A549 (cell line): ENCODE measurements at regions of chr10 and their contacts with region 1.

Region 1: GRCh38 chr10:21495752-21496342 is 29.6 kb downstream of the SKIDA1 start:
- DNase-seq: peak; percentile 94
- ATAC-seq: peak; percentile 78 to 81
- H3K4me3 ChIP-seq: peak overlapping the region; percentile 77
- H3K27ac ChIP-seq: peak overlapping the region; percentile 93 to 99
- H3K4me1 ChIP-seq: peaks cover 37% of the 10 kb centered on the region
- CTCF ChIP-seq: peak; percentile 93
- EP300 ChIP-seq: peak in 1 of 2 experiments; percentile 48; a peak in 1 of 5 replicates
- POLR2A ChIP-seq: peak; percentile 53
- RAD21 ChIP-seq: peak; percentile 81 to 99

Region 2: DNA sequence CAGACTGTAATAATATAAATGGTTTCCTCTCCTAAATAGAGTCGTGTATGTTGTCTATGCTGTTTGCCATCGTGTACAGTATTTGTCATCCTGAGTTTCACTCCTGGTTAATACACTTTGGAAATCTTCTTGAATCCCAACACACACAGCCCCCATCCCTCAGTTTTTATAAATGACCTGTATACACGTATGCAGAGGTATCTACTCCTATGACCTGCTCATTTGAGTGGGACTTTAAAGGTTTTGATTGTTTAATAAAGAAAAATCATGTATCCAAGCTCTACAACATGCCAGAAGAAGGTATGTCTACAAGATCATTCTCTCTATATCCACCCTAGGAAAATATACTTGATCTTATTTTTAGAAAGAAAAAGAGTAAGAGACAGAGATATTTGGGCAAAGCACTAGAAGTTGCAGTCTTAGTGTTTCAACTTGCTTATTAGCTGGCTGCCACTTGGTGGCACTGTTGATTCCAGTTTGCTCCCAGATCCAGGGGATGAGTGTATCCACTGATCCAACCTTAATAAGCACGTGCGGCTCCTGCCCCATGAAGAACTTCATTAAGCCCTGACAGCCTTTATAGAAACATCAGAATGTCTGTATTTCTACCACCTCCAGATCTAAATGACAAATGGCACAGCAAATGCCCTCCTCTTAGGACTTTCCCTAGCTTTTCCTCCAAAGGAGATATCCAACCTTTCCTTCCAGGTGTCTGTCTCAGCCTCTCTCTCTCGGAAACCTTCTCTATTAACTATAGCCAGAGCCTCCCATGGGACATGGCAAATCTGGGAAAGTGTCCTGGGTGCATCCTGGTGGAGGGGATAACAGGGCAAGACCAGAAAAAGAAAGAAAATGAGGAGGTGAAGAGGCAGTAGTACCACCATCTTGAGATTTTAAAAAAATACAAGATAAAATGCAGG is 417.2 kb before region 1 on chr10:
- CTCF ChIA-PET with region 1: interaction called, 12 read pairs
- POLR2A ChIA-PET with region 1: interaction called, 5 read pairs
- DNase-seq: peak; percentile 55 to 81
- ATAC-seq: peak; percentile 95 to 97
- H3K4me3 ChIP-seq: no peak overlapping the region
- H3K27ac ChIP-seq: peak overlapping the region; percentile 74 to 75
- H3K4me1 ChIP-seq: peaks cover 20% of the 10 kb centered on the region
- CTCF ChIP-seq: peak; percentile 92
- EP300 ChIP-seq: no peak
- POLR2A ChIP-seq: no peak
- RAD21 ChIP-seq: peak; percentile 98

Region 3: DNA sequence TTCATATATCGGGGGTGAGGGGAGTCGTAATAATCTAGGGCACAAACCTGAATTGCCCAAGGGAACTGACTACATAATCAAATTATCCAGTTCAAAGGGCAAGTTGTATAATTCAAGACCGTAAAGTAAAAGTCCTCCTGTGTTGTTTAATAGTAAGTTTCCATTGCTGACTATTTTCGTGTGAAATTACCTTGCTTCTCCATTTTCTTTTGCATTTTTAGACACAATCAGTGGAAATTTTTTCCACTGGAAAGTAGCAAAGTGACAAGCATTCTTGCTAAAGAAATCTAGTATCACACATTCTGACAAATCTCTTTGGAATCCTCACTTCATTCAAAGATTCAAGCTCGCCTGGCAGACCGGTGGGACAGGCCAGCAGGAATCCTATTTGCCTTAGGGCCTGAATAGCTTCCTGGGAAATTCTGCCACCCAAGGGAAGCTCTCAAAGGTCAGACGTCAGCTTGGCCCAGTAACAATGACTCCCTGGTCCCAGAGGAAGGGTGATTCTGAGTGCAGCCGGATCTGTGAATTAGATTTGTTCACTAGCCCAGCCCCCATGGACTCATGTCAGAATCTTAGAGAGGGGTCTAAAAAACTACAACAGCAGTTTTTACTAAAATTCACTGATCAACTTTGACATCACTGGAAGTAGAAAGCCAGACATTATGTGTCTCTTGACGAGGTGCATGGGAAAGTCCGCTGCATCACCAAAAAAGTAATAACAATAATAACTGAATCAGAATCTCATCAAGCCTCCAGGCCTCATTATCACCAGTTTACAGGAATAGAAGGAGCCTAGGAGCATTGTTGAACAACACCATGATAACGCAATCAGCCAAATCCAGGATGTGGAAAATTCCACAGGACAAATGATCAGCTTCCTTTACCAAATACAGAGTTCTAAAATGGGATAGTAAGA is 131.4 kb before region 1 on chr10:
- CTCF ChIA-PET with region 1: interaction called, 25 read pairs
- POLR2A ChIA-PET with region 1: interaction called, 13 read pairs
- DNase-seq: peak; percentile 89 to 99
- ATAC-seq: peak; percentile 96 to 97
- H3K4me3 ChIP-seq: peak overlapping the region; percentile 18; the same call in 1 of the 3 replicates
- H3K27ac ChIP-seq: peak overlapping the region; percentile 95 to 98
- H3K4me1 ChIP-seq: peaks cover 80% of the 10 kb centered on the region
- CTCF ChIP-seq: no peak
- EP300 ChIP-seq: peak; percentile 89 to 96; a peak in 4 of 5 replicates
- POLR2A ChIP-seq: no peak
- RAD21 ChIP-seq: peak; percentile 56 to 64

Region 4: DNA sequence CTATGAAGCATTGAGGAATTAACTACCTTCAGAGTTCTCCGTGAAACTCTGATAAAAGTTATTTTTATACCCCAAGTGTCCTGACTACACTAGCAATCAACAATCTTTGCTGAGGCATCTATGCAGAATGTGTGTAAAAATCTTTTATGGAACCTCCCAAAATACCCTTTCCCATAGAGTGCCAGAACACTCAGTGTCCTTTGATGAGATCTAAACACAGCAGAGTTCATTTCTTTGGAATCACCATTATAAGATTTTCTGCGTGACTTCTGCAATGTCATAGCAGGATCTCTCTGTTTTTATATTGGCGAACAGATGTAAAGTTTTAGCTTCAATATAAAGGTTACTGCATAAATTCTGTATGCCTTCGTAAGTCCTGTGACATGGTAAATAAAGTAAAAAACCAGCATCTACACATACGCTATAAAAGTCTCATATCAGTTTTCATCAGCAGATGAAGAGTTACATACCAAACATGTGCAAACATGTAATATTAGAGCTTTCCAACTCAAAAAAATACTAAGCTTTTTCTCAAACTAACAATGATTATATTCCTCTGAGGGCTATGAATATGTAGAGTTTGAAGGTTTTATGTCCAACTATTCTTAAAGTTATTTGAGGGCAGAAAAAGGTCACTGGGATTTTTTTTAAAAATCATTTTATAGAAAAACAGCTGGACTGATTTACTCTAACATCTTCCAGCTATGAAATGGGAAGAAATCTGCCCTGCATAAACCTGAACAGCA is 37.5 kb before region 1 on chr10:
- CTCF ChIA-PET with region 1: no interaction called
- POLR2A ChIA-PET with region 1: no interaction called
- DNase-seq: no peak
- ATAC-seq: no peak
- H3K4me3 ChIP-seq: no peak overlapping the region
- H3K27ac ChIP-seq: no peak overlapping the region
- H3K4me1 ChIP-seq: no peaks in the 10 kb centered on the region
- CTCF ChIP-seq: no peak
- EP300 ChIP-seq: no peak
- POLR2A ChIP-seq: no peak
- RAD21 ChIP-seq: no peak

Region 5: GRCh38 chr10:21525367-21526183 is 29.7 kb after region 1 on chr10 and contains the start of gene SKIDA1:
- CTCF ChIA-PET with region 1: interaction called, 37 read pairs
- POLR2A ChIA-PET with region 1: interaction called, 85 read pairs
- DNase-seq: peak; percentile 69 to 92
- ATAC-seq: peak; percentile 64 to 76
- H3K4me3 ChIP-seq: peak within 1 kb of the TSS; percentile 60
- H3K27ac ChIP-seq: peak within 1 kb of the TSS; percentile 94 to 99
- H3K4me1 ChIP-seq: peaks cover 30% of the 10 kb centered on the region
- CTCF ChIP-seq: no peak
- EP300 ChIP-seq: peak in 1 of 2 experiments; percentile 34; a peak in 1 of 5 replicates
- POLR2A ChIP-seq: peak; percentile 41
- RAD21 ChIP-seq: no peak
- polyA plus RNA-seq, gene SKIDA1: 0.87 and 1.0 TPM in 2 replicates

Region 6: GRCh38 chr10:21724695-21725367 is 229.0 kb after region 1 on chr10:
- CTCF ChIA-PET with region 1: interaction called, 63 read pairs
- POLR2A ChIA-PET with region 1: interaction called, 9 read pairs
- DNase-seq: peak; percentile 49 to 94
- ATAC-seq: peak; percentile 77 to 81
- H3K4me3 ChIP-seq: no peak overlapping the region
- H3K27ac ChIP-seq: peak overlapping the region in 1 of 2 experiments; percentile 0; a peak in 1 of 6 replicates
- H3K4me1 ChIP-seq: peaks cover 83% of the 10 kb centered on the region
- CTCF ChIP-seq: no peak
- EP300 ChIP-seq: no peak
- POLR2A ChIP-seq: no peak
- RAD21 ChIP-seq: no peak; a peak in 1 of 5 replicates

Region 7: DNA sequence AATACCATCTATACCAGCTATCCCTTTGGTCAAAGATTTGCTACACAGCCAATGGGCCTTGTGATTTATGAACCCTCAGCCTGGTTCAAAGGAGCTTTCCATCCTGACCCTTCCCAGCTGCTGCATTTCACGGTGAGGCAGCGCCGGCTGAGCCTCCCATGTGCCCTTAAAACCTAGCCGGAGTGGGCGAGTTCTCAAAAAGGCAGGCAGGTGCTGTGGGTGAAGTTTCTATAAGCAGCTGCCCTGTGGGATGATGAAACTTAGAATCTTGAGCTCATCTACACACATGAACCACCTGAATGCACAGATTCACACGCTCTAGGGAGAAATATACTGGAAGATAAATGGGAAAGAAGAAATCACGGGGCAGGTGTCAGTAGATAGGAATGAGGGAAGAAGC is 262.8 kb after region 1 on chr10:
- CTCF ChIA-PET with region 1: no interaction called
- POLR2A ChIA-PET with region 1: no interaction called
- DNase-seq: no peak
- ATAC-seq: no peak
- H3K4me3 ChIP-seq: no peak overlapping the region
- H3K27ac ChIP-seq: no peak overlapping the region
- H3K4me1 ChIP-seq: no peaks in the 10 kb centered on the region
- CTCF ChIP-seq: no peak
- EP300 ChIP-seq: no peak
- POLR2A ChIP-seq: no peak
- RAD21 ChIP-seq: no peak

Region 8: GRCh38 chr10:21953585-21954057 is 457.8 kb after region 1 on chr10:
- CTCF ChIA-PET with region 1: interaction called, 10 read pairs
- POLR2A ChIA-PET with region 1: interaction called, 3 read pairs
- DNase-seq: peak; percentile 57 to 69
- ATAC-seq: peak; percentile 78 to 81; a peak in 5 of 6 replicates
- H3K4me3 ChIP-seq: no peak overlapping the region
- H3K27ac ChIP-seq: no peak overlapping the region
- H3K4me1 ChIP-seq: peaks cover 16% of the 10 kb centered on the region
- CTCF ChIP-seq: peak; percentile 66
- EP300 ChIP-seq: no peak
- POLR2A ChIP-seq: no peak
- RAD21 ChIP-seq: peak; percentile 60 to 81